Astrocyte of the cerebellum (primary cell): ENCODE measurements at regions of chr9 and their contacts with region 1.

Region 1: GRCh38 chr9:104903609-104904008 is 24.3 kb downstream of the ABCA1 start:
- DNase-seq: peak; percentile 86
- H3K4me3 ChIP-seq: no peak overlapping the region
- CTCF ChIP-seq: no peak

Region 2: DNA sequence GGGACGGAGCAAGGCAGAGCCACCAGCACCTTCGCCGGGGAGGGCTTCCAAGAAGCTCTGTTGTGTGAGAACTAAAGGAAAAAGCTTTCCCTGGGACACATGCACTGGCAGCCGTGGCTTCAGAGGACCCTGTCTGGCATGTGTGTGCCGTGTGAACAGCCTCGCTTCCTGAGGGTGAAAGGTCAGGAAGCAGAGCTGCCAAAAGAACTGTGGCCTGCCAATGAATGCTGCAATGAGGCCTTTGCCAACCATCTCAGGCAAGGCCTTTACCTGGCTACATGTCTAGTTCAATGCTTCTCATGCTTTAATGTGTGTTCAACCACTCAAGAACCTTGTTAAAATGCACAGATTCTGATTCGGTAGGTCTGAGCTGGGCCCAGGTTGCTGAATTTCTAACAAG is 86.2 kb before region 1 on chr9:
- in situ Hi-C with region 1: loop called (anchors 5 kb)
- DNase-seq: no peak
- H3K4me3 ChIP-seq: no peak overlapping the region
- CTCF ChIP-seq: no peak

Region 3: DNA sequence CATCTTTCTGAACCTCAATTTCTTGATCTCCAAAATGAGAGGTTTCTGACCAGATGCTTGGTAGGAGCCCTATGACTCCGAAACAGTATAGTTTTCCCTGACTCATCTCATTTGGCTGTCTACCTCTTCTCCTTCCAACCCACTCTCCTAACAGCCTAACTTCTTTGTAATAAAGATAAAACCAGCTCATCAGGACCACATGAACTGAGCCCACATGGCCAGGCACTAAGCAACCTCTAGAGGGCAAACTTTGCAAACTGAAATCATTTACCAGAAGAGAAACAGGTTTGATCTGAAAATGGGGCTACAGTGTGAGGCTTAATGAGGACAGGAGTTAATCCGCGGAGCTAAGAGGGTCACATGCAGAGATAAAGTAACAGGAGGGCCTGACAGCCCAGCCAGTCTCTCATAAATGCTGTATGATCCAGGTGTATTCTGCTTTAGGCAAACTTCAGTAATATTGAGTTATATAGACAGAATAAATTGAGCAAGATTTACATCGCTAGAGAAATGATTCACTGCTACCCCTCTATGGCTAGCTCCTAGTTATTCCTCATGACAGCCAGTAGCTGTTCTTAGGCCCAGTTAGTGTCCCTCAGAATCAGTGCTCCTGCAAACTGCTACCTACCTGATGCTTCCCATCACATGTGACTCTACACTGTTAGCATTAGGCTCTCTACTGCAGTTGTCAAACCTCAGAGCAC is 40.3 kb before region 1 on chr9:
- in situ Hi-C with region 1: no loop called
- DNase-seq: peak; percentile 74
- H3K4me3 ChIP-seq: no peak overlapping the region
- CTCF ChIP-seq: peak; percentile 94